ENCODE measurements at regions of chr4 and their contacts with region 1.

Region 1: GRCh38 chr4:101347557-101348366 is 436 bp upstream of the PPP3CA start:
- DNase-seq: peak; percentile 99
- ATAC-seq: peak; percentile 75 to 84
- H3K4me3 ChIP-seq: peak overlapping the region; percentile 82 to 96 (median 90)
- H3K27ac ChIP-seq: peak overlapping the region; percentile 95 to 100 (median 96)
- H3K4me1 ChIP-seq: peaks cover 31 to 40% of the 10 kb centered on the region in 2 donors
- H3K27me3 ChIP-seq: no peaks in the 10 kb centered on the region
- CTCF ChIP-seq: peak in 3 of 5 experiments; percentile 10 to 32 (median 13)
- POLR2A ChIP-seq: peak; percentile 63 to 77

Region 2: DNA sequence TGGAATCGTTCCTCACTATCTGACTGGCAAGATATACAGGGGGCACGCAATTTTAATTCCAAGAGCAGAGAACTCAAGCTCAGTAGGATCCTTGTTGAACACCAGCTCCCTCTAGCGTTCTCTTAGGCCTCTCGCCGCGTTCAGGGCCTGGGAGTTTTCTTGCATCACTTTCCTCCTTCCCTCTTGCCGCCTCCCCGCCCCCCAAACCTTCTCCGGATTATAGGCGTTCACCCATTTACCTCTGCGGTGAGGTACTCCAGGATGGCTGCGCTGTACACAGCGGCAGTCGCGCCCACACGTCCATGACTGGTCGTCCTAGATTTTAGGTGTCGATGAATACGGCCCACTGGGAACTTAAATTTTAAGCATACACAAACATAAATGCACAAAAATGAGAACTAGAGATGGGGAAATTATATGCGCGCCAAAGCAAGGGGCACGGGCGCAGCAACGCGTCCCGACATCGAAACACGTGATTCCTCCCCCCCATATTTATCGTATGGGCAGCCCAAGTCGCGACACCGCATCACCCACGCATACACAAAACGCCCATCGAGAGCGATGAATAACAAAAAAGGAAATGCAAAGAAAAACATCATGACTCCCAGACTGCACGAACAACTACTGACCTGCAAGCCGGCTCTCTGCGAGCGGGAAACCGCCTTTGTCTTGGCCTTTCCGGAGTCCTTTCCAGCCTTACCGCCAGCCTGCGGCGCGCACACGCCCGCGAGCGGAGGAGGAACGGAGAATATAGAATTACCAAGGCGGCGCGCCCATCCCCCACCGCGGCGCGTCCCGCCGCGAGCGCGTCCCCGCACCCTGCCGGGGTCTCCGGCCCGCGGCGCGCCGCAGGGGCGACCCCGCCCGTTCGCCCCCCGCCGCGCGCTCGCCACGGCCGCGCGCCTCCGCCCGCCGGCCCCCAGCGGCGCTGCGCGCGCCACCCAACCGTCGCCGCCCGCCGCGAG is 1398.4 kb before region 1 on chr4:
- in situ Hi-C with region 1: no loop called
- intact Hi-C with region 1: loop called (anchors 10 kb)
- DNase-seq: peak; percentile 81 to 89
- ATAC-seq: peak; percentile 56 to 67
- H3K4me3 ChIP-seq: peak overlapping the region; percentile 79 to 95 (median 86)
- H3K27ac ChIP-seq: peak overlapping the region; percentile 96 to 98 (median 98)
- H3K4me1 ChIP-seq: peaks cover 30 to 40% of the 10 kb centered on the region in 2 donors
- H3K27me3 ChIP-seq: no peaks in the 10 kb centered on the region
- CTCF ChIP-seq: peak; percentile 73 to 93 (median 80)
- POLR2A ChIP-seq: no peak

Region 3: DNA sequence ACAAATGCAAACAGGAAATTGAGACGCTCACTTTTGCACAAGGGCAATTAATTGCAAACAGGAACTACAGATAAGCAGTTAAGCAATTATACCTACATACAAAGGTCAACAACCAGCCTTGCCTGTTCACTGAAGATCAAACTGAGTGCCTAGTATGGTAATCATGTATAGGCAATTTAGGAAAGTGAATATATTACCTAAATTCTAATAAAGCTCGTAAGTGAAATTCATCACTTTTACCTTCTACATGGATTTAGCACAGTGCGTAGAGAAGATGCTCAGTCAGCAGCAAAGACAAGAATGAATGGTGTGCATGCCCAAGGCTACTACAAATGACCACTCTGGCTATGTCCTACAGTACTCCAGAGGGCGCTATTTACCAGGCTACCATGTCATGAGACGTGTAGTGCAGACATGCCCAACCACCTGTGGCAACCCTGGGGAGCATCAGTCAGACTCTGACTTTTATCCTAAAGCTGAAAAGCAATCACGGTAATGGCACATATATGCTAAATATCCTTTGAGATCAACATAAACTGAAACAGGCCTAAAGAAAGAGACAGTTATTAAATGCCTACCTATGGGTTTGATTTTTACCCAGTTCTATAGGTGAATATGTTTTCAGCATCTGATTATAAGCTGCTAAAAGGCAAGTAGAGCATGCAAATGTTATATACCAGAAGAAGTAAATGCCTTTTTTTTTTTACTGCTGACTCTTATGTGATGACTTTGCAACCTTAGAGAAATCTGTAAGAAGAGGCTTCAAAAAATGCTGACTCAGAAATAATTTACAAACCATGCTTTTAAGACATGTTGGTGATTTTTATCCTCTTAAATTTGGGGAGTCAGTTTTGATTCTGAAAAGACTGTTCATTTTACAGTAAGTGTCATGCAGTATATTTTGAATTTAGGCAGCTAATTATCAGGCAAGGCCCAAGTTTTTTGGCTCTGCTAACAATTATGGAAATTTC is 178.4 kb before region 1 on chr4:
- in situ Hi-C with region 1: no loop called
- intact Hi-C with region 1: loop called (anchors 1 kb)
- DNase-seq: peak; percentile 28 to 61
- ATAC-seq: peak; percentile 92 to 98
- H3K4me3 ChIP-seq: no peak overlapping the region
- H3K27ac ChIP-seq: no peak overlapping the region
- H3K4me1 ChIP-seq: peaks cover 0 to 17% of the 10 kb centered on the region in 2 donors
- H3K27me3 ChIP-seq: no peaks in the 10 kb centered on the region
- CTCF ChIP-seq: peak; percentile 69 to 83 (median 77)
- POLR2A ChIP-seq: no peak

Region 4: GRCh38 chr4:101205916-101206315 is 141.8 kb before region 1 on chr4:
- in situ Hi-C with region 1: loop called in 1 of 4 experiments (anchors 25 kb)
- intact Hi-C with region 1: no loop called
- DNase-seq: no peak
- ATAC-seq: peak in 1 of 2 donors; percentile 21
- H3K4me3 ChIP-seq: no peak overlapping the region
- H3K27ac ChIP-seq: no peak overlapping the region
- H3K4me1 ChIP-seq: peaks cover 13 to 17% of the 10 kb centered on the region in 2 donors
- H3K27me3 ChIP-seq: no peaks in the 10 kb centered on the region
- CTCF ChIP-seq: no peak
- POLR2A ChIP-seq: no peak

Region 5: DNA sequence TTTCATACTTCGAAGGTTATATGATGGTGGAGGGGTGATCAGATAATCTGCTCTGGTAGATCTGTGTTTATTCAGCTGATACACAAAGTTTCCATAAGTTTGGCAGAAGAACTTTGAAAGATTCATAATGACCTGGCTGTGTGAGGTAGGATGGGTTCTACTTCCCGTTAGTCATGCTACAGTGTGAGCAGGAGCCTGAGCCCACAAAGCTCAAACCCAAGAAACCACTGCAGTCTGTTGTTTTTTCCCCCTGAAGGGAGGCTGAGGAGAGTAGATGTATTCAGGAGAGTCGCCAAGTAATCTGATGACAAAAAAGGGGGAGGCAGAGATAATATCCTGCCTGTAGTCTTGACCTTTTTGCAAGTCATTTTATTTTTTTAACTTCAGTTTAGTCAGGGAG is 52.3 kb after region 1 on chr4:
- in situ Hi-C with region 1: no loop called
- intact Hi-C with region 1: no loop called
- DNase-seq: no peak
- ATAC-seq: no peak
- H3K4me3 ChIP-seq: no peak overlapping the region
- H3K27ac ChIP-seq: no peak overlapping the region
- H3K4me1 ChIP-seq: no peaks in the 10 kb centered on the region
- H3K27me3 ChIP-seq: no peaks in the 10 kb centered on the region
- CTCF ChIP-seq: no peak
- POLR2A ChIP-seq: no peak

Region 6: DNA sequence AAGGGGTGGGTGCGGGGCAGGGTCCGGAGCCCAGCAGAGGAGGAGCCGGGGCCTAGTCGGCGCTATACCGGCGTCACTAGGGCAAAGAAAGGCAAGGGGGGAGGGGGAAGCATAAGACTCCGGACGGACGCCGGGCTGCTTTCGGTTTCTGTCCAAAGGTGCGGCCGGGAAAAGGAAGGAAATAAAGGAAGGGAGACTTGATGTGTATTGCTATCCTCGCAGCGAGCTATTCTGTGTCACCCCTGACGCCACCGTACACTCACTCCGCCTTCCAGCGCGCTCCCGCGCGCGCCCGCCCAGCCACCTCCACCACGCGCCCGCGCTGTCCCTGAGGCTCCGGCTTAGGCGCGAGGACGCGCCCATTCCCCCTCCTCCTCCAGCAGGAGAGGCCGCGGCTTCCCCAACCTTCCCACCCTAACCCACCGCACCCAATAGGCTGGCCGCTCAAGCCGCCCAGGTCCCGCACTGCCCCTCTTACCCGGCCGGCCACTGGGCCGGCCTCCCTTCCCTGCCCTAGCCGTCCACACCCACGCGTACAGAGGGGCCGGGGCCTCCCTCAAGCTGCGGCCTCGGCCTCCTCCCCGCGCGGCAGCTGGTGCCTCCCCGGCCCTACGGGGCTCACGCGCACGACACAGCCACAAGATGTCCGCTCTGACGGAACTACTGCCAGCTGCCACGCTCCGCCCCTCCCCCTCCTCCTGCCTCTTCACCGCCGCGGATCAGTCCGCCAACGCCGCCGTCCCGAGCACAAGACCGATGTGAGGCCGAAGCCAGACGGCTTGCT is 1479.3 kb after region 1 on chr4 and contains the start of gene UBE2D3:
- in situ Hi-C with region 1: no loop called
- intact Hi-C with region 1: loop called (anchors 10 kb)
- DNase-seq: peak; percentile 88 to 92
- ATAC-seq: peak; percentile 53 to 68
- H3K4me3 ChIP-seq: peak within 1 kb of the TSS; percentile 68 to 100 (median 94)
- H3K27ac ChIP-seq: peak within 1 kb of the TSS; percentile 94 to 100 (median 100)
- H3K4me1 ChIP-seq: peaks cover 31 to 40% of the 10 kb centered on the region in 2 donors
- H3K27me3 ChIP-seq: no peaks in the 10 kb centered on the region
- CTCF ChIP-seq: peak in 1 of 5 experiments; percentile 12
- POLR2A ChIP-seq: peak; percentile 81 to 87
- total RNA-seq, gene UBE2D3: 350 to 562 (median 392) TPM